ENCODE measurements at regions of chr5 and their contacts with region 1.

Region 1: DNA sequence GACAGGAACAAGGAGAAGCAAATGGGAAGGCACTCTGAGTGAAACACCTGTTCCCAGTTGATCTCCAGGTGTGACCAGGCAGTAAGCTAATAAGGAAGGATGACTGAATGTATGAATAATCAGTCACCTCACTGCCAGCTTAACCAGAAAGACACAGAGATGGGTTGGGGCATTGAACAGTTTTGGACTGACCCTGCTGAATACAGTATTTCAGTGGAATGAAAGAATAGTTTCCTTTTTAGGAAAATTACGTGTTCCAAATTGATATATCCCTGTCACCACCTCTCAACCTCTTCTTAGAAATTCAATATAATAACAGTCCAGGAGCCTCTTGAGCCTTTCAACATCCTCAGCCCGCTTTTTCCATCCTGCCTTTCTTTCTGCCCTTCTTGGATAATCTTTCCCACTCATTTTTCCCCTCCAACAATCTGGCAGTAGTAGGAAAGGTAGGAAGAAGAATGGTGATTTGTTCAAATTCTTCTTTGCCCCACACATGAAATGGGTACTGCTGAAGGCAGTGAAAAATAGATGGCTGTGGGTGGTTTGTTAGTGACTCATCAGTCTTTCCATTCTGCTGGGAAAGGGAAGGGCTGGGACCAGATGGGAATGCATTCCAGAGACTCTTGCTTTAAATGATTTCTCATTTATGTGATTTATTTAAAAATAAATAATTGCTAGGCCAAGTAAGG is 117.9 kb downstream of the ZSWIM6 start:
- DNase-seq: peak in 1 of 10 donors; percentile 36
- H3K4me3 ChIP-seq: no peak overlapping the region
- H3K27ac ChIP-seq: peak overlapping the region in 54 of 59 donors; percentile 3 to 85 (median 64)
- H3K27me3 ChIP-seq: no peaks in the 10 kb centered on the region
- CTCF ChIP-seq: no peak

Region 2: GRCh38 chr5:60738461-60738860 is 711.5 kb before region 1 on chr5:
- intact Hi-C with region 1: no loop called
- DNase-seq: no peak
- H3K4me3 ChIP-seq: no peak overlapping the region
- H3K27ac ChIP-seq: no peak overlapping the region
- H3K27me3 ChIP-seq: no peaks in the 10 kb centered on the region
- CTCF ChIP-seq: no peak

Region 3: GRCh38 chr5:61120534-61120933 is 329.4 kb before region 1 on chr5:
- intact Hi-C with region 1: no loop called
- DNase-seq: no peak
- H3K4me3 ChIP-seq: no peak overlapping the region
- H3K27ac ChIP-seq: no peak overlapping the region
- H3K27me3 ChIP-seq: no peaks in the 10 kb centered on the region
- CTCF ChIP-seq: no peak

Region 4: GRCh38 chr5:61331407-61332357 is 118.3 kb before region 1 on chr5 and contains the start of gene ZSWIM6:
- intact Hi-C with region 1: no loop called
- DNase-seq: peak; percentile 98 to 100 (median 100)
- H3K4me3 ChIP-seq: peak within 1 kb of the TSS; percentile 74 to 98 (median 93)
- H3K27ac ChIP-seq: peak within 1 kb of the TSS; percentile 77 to 99 (median 96)
- H3K27me3 ChIP-seq: no peaks in the 10 kb centered on the region
- CTCF ChIP-seq: peak in 12 of 56 donors; percentile 8 to 46 (median 24)
- total RNA-seq, gene ZSWIM6: 22.5 to 67.2 (median 31.6) TPM

Region 5: GRCh38 chr5:61625681-61626621 is 176.0 kb after region 1 on chr5:
- intact Hi-C with region 1: loop called in 1 of 2 experiments (anchors 10 kb)
- DNase-seq: peak; percentile 60 to 90 (median 84)
- H3K4me3 ChIP-seq: peak overlapping the region; percentile 40 to 74 (median 59)
- H3K27ac ChIP-seq: peak overlapping the region; percentile 77 to 99 (median 96)
- H3K27me3 ChIP-seq: no peaks in the 10 kb centered on the region
- CTCF ChIP-seq: peak in 27 of 56 donors; percentile 8 to 52 (median 29)